Dendritic cell treated with granulocyte-macrophage colony-stimulating factor and Interleukin-4, amounts not matched to agents 40 ng/mL and 50 ng/mL, for 4 days (primary cell): ENCODE measurements at regions of chr2 and their contacts with region 1.

Region 1: GRCh38 chr2:114949228-114949804 is 506.9 kb downstream of the DPP10 start:
- H3K4me3 Mint-ChIP-seq: no peak overlapping the region
- H3K27ac Mint-ChIP-seq: no peak overlapping the region
- H3K4me1 Mint-ChIP-seq: no peaks in the 10 kb centered on the region
- H3K27me3 Mint-ChIP-seq: no peaks in the 10 kb centered on the region

Region 2: GRCh38 chr2:114031605-114032505 is 917.5 kb before region 1 on chr2:
- intact Hi-C with region 1: no loop called
- H3K4me3 Mint-ChIP-seq: no peak overlapping the region
- H3K27ac Mint-ChIP-seq: no peak overlapping the region
- H3K4me1 Mint-ChIP-seq: no peaks in the 10 kb centered on the region
- H3K27me3 Mint-ChIP-seq: peaks cover 6% of the 10 kb centered on the region

Region 3: GRCh38 chr2:114925296-114926255 is 23.7 kb before region 1 on chr2:
- intact Hi-C with region 1: loop called (anchors 2 kb)
- H3K4me3 Mint-ChIP-seq: no peak overlapping the region
- H3K27ac Mint-ChIP-seq: no peak overlapping the region
- H3K4me1 Mint-ChIP-seq: no peaks in the 10 kb centered on the region
- H3K27me3 Mint-ChIP-seq: no peaks in the 10 kb centered on the region